Activated T-helper 2 cell treated with anti-CD3 and anti-CD28 coated beads, Interferon-gamma antibody, Interleukin-2, Interleukin-4, amounts not matched to agents 10 μg/mL and 5 μg/mL and 100 μg/mL, durations not matched to agents 14 hours and 24 hours and 36 hours (primary cell): ENCODE measurements at regions of chr5 and their contacts with region 1.

Region 1: DNA sequence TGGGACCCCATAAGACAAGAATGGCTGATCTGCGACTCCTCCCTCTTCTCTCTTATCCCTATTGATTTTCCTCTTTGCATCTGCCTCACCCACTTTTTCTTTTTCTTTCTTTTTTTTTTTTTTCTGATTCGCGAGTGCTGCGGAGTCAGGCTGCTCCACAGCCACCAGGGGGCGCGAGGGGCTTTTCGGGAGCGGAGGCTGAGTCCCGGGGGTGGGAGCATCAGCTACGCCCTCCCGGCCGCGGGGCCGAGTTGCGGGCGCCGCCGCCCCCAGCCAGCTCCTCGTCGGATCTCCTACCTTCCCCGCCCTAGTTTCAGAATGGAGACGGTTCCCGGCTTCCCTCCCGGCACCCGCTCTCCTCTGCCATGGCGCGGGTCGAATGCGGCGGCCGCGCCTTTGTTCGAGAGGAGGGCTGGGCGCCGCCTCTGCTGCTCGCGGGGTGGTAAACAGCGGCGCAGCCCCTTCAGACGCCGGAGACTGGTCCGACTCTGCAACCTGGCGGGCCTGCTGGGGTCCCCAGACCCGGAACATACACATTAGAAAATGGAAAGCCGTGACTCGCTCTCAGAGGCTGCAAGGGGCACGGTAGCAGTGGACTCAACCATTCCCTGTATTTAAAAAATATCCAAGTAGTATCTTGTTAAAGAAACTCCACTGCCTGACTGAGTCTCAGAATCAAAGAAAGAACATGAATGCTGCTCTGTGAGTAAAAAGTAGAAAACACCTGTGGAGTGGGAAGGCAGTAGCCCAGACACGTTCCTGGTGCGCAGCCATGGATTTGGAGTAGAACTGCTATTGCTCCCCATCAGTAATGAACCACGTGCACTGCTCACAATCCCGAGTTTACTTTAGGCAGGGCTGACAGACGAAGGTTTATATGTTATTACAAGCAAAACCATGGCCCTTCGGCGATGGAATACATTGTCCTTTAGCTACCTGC is 55.7 kb downstream of the DPYSL3 start:
- DNase-seq: peak; percentile 60
- H3K4me3 Mint-ChIP-seq: peak overlapping the region; percentile 81
- H3K27ac Mint-ChIP-seq: no peak overlapping the region
- H3K4me1 Mint-ChIP-seq: peaks cover 5% of the 10 kb centered on the region
- H3K27me3 Mint-ChIP-seq: peaks cover 61% of the 10 kb centered on the region

Region 2: GRCh38 chr5:147276497-147276896 is 177.6 kb before region 1 on chr5:
- intact Hi-C with region 1: no loop called
- DNase-seq: no peak
- H3K4me3 Mint-ChIP-seq: no peak overlapping the region
- H3K27ac Mint-ChIP-seq: no peak overlapping the region
- H3K4me1 Mint-ChIP-seq: no peaks in the 10 kb centered on the region
- H3K27me3 Mint-ChIP-seq: no peaks in the 10 kb centered on the region

Region 3: GRCh38 chr5:147576646-147577535 is 122.7 kb after region 1 on chr5:
- intact Hi-C with region 1: loop called (anchors 5 kb)
- DNase-seq: peak; percentile 13
- H3K4me3 Mint-ChIP-seq: no peak overlapping the region
- H3K27ac Mint-ChIP-seq: no peak overlapping the region
- H3K4me1 Mint-ChIP-seq: no peaks in the 10 kb centered on the region
- H3K27me3 Mint-ChIP-seq: no peaks in the 10 kb centered on the region